ENCODE measurements at regions of chr17 and their contacts with region 1.

Region 1: GRCh38 chr17:82170412-82170961 is 42.2 kb downstream of the CCDC57 start:
- DNase-seq: no peak
- ATAC-seq: no peak
- H3K4me3 ChIP-seq: no peak overlapping the region
- H3K27ac ChIP-seq: no peak overlapping the region
- H3K4me1 ChIP-seq: no peaks in the 10 kb centered on the region
- H3K27me3 ChIP-seq: no peaks in the 10 kb centered on the region
- CTCF ChIP-seq: no peak
- POLR2A ChIP-seq: no peak
- RAD21 ChIP-seq: no peak

Region 2: DNA sequence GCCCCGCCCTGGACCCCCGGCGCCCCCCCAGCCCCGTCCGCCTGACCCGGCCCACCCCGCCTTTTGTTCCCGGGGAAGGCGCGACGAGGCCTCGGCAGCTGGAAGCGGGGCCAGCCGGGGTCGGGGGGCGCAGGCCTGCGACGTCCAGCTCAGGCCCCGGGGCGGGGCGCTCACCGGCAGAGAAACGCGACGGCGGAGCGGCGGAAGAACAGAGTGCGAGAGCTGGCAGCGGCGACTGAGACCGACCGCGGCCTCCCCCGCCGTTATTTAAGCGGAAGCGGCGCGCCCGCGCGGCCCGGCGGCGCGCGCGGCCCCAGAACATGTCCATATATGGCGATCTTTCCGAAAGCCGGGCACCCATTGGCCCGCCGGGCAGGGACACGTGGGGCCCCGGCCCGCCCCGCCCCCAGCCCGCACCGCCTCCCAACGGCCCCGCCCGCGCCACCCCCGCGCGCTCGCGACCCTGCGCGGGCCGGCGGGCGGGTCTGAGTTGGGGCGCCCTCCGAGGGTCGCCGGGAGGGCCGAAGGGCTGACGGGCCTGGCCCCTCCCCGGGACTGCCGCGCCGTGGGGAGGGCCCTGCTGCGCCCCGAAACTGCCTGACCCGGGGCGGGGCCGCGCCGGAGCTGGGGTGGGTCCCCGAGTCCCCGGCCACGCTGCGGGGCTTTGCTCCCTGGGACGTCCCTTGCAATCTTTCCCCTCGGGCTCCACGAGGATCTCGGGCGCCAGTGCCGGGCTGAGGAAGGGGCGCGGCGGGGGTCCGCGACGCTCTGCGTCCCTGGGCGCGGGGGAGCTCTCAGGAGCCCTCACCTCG is 657.7 kb before region 1 on chr17 and contains the start of gene ACTG1:
- CTCF ChIA-PET with region 1: no interaction called
- POLR2A ChIA-PET with region 1: no interaction called
- dilution Hi-C with region 1: no loop called
- in situ Hi-C with region 1: no loop called
- intact Hi-C with region 1: no loop called
- DNase-seq: peak; percentile 91
- ATAC-seq: peak; percentile 25
- H3K4me3 ChIP-seq: peak within 1 kb of the TSS; percentile 79
- H3K27ac ChIP-seq: peak within 1 kb of the TSS; percentile 99
- H3K4me1 ChIP-seq: peaks cover 14% of the 10 kb centered on the region
- H3K27me3 ChIP-seq: no peaks in the 10 kb centered on the region
- CTCF ChIP-seq: no peak
- POLR2A ChIP-seq: peak; percentile 99
- RAD21 ChIP-seq: no peak
- total RNA-seq, gene ACTG1: 12,144 and 15,732 TPM in 2 replicates

Region 3: GRCh38 chr17:82124101-82124500 is 46.4 kb before region 1 on chr17:
- CTCF ChIA-PET with region 1: no interaction called
- POLR2A ChIA-PET with region 1: interaction called, 13 read pairs
- dilution Hi-C with region 1: no loop called
- in situ Hi-C with region 1: no loop called
- intact Hi-C with region 1: no loop called
- DNase-seq: no peak
- ATAC-seq: no peak
- H3K4me3 ChIP-seq: no peak overlapping the region
- H3K27ac ChIP-seq: no peak overlapping the region
- H3K4me1 ChIP-seq: peaks cover 8% of the 10 kb centered on the region
- H3K27me3 ChIP-seq: no peaks in the 10 kb centered on the region
- CTCF ChIP-seq: no peak
- POLR2A ChIP-seq: no peak
- RAD21 ChIP-seq: no peak

Region 4: DNA sequence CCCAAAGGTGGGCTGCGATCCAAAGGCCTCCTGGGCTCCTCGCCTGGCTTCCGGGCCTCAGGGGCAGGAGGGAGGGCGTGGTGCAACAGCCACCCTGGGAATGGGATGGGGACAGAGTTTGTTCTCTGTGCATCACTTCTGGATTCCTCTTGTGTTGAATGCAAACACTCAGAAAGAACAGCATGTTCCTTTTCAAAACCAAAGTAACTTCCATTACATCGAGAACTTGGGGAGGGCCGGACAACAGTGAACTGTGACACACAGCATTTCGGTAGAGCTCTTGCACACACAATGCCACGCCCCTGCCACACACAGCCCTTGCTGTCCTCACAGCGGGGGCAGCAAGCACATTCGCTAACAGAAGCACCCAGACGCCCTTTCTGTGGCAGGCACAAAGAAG is 36.4 kb before region 1 on chr17:
- CTCF ChIA-PET with region 1: no interaction called
- POLR2A ChIA-PET with region 1: no interaction called
- dilution Hi-C with region 1: no loop called
- in situ Hi-C with region 1: no loop called
- intact Hi-C with region 1: loop called (anchors 1 kb)
- DNase-seq: no peak
- ATAC-seq: no peak
- H3K4me3 ChIP-seq: no peak overlapping the region
- H3K27ac ChIP-seq: no peak overlapping the region
- H3K4me1 ChIP-seq: no peaks in the 10 kb centered on the region
- H3K27me3 ChIP-seq: no peaks in the 10 kb centered on the region
- CTCF ChIP-seq: no peak
- POLR2A ChIP-seq: no peak
- RAD21 ChIP-seq: no peak

Region 5: DNA sequence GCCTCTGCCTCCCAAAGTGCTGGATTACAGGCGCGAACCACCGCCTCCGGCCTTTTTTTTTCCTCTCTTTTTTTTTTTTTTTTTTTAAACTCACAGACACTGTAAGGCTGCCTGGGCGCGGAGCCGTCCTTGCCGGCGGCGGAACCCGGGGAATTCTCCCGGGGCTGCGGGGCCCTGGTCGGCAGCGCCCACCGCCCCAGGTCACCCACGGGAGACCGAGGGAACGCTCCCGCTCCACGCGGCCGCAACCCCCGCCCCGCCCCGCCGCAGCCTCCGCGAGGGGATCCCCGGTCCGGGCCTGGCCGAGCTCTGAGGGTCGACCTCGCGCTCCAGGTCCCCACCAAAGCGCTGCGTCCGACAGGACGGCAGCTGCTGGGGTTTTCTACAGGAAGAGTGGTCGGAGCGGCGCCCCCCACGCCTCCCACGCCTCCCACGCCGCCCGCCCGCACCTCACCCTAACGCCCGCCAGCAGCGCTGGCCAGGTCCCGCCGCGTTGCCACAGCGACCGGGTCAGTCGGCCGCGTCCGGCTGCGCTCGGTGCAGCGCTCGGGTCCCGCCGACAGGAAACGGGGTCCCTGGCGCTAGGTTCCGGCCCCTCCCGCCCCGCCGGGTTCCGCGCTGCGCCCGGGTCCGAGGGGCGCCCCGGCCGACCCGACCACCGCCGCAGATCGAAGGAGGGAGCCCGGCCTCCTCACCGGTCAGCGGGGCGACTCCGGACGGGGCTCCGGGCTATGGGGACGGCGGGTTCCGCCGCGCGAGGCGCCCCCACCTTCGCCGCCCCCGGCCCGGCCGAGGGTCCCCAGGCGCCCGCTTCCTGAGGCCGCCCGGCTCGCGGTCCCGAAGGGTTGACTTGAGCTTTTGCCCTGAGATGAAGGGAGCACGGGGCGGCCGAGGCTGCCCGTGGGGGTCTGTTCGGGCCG is 42.1 kb after region 1 on chr17 and contains the start of gene CCDC57:
- CTCF ChIA-PET with region 1: no interaction called
- POLR2A ChIA-PET with region 1: no interaction called
- dilution Hi-C with region 1: no loop called
- in situ Hi-C with region 1: no loop called
- intact Hi-C with region 1: no loop called
- DNase-seq: peak; percentile 68
- ATAC-seq: peak; percentile 70
- H3K4me3 ChIP-seq: peak within 1 kb of the TSS; percentile 92
- H3K27ac ChIP-seq: peak within 1 kb of the TSS; percentile 86
- H3K4me1 ChIP-seq: peaks cover 34% of the 10 kb centered on the region
- H3K27me3 ChIP-seq: no peaks in the 10 kb centered on the region
- CTCF ChIP-seq: no peak
- POLR2A ChIP-seq: no peak
- RAD21 ChIP-seq: no peak
- total RNA-seq, gene CCDC57: 6.9 and 7.3 TPM in 2 replicates